CD8-positive, alpha-beta T cell (primary cell): ENCODE measurements at regions of chr4 and their contacts with region 1.

Region 1: GRCh38 chr4:75940692-75941253 is at the start of gene NAAA:
- DNase-seq: peak; percentile 44 to 92 (median 72)
- ATAC-seq: peak; percentile 79
- H3K4me3 ChIP-seq: peak within 1 kb of the TSS; percentile 71 to 85
- H3K4me3 Mint-ChIP-seq: peak within 1 kb of the TSS; percentile 95
- H3K27ac ChIP-seq: peak within 1 kb of the TSS; percentile 77 to 88
- H3K27ac Mint-ChIP-seq: peak within 1 kb of the TSS; percentile 95
- H3K4me1 ChIP-seq: peaks cover 5% of the 10 kb centered on the region
- H3K4me1 Mint-ChIP-seq: peaks cover 26% of the 10 kb centered on the region
- H3K27me3 ChIP-seq: no peaks in the 10 kb centered on the region
- H3K27me3 Mint-ChIP-seq: no peaks in the 10 kb centered on the region
- CTCF ChIP-seq: no peak
- total RNA-seq, gene NAAA: 26.1 to 30.4 TPM

Region 2: DNA sequence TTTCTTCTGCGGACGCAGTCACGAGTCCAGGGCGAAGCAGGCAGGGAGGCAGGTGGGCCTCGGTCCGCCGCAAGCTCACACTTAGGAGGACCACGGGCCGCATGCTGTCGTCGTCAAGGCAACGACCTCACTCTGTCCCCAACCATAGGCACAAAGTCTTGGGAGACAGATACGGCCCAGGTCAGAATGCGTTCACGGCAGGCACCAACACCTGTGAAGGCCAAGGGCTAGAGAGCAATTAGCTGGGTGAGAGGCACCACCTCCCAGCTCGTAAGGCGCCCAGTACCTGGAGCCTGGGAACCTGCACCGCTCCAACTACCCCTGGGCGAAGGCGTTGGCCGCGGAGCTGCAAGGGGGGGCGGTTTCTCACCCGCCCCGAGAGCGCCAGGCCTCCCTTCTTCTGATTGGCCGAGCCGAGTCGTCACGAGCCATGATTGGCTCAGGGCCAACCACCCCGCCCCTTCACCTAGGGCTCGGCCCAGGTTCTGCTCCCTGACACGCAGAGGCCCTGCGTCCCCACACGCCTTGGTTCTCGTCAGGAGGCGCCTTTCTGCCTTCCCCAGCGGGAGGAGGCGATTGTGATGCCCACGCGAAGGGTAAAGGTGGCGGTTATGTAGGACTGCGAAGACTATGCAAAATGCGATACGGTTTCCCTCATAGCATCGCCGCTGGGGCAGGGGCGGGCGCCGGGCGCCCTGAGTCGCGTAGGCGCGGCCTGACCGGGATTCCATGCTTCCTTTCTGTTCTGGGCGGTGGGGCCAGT is 310.4 kb before region 1 on chr4 and contains the start of gene CDKL2:
- CTCF ChIA-PET with region 1: no interaction called
- POLR2A ChIA-PET with region 1: no interaction called
- intact Hi-C with region 1: loop called (anchors 1 to 10 kb)
- DNase-seq: peak; percentile 85 to 96 (median 95)
- ATAC-seq: peak; percentile 99
- H3K4me3 ChIP-seq: peak within 1 kb of the TSS; percentile 74 to 82
- H3K4me3 Mint-ChIP-seq: peak within 1 kb of the TSS; percentile 91
- H3K27ac ChIP-seq: peak within 1 kb of the TSS; percentile 51 to 56
- H3K27ac Mint-ChIP-seq: peak within 1 kb of the TSS; percentile 84
- H3K4me1 ChIP-seq: peaks cover 6% of the 10 kb centered on the region
- H3K4me1 Mint-ChIP-seq: peaks cover 15% of the 10 kb centered on the region
- H3K27me3 ChIP-seq: no peaks in the 10 kb centered on the region
- H3K27me3 Mint-ChIP-seq: no peaks in the 10 kb centered on the region
- CTCF ChIP-seq: no peak
- total RNA-seq, gene CDKL2: 0.89 to 1.4 TPM

Region 3: DNA sequence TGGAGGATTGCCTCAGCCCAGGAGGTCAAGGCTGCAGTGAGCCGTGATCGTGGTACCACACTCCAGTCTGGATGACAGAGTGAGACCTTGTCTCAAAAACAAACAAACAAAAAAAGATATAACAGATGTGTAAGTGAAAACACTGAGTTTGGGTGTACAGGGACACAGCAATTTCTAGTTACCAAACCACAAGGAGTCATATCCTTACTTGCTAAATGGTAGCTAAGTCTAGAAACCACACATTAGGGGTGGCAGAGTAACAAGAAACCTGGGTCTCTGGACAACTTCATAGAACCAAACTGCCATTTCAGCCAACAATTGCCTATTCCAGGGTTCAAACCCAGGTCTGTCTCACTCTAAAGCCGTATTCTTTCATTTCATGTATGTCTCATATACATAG is 59.3 kb before region 1 on chr4:
- CTCF ChIA-PET with region 1: no interaction called
- POLR2A ChIA-PET with region 1: no interaction called
- intact Hi-C with region 1: no loop called
- DNase-seq: no peak
- ATAC-seq: no peak
- H3K4me3 ChIP-seq: no peak overlapping the region
- H3K4me3 Mint-ChIP-seq: no peak overlapping the region
- H3K27ac ChIP-seq: no peak overlapping the region
- H3K27ac Mint-ChIP-seq: no peak overlapping the region
- H3K4me1 ChIP-seq: no peaks in the 10 kb centered on the region
- H3K4me1 Mint-ChIP-seq: no peaks in the 10 kb centered on the region
- H3K27me3 ChIP-seq: no peaks in the 10 kb centered on the region
- H3K27me3 Mint-ChIP-seq: no peaks in the 10 kb centered on the region
- CTCF ChIP-seq: no peak

Region 4: DNA sequence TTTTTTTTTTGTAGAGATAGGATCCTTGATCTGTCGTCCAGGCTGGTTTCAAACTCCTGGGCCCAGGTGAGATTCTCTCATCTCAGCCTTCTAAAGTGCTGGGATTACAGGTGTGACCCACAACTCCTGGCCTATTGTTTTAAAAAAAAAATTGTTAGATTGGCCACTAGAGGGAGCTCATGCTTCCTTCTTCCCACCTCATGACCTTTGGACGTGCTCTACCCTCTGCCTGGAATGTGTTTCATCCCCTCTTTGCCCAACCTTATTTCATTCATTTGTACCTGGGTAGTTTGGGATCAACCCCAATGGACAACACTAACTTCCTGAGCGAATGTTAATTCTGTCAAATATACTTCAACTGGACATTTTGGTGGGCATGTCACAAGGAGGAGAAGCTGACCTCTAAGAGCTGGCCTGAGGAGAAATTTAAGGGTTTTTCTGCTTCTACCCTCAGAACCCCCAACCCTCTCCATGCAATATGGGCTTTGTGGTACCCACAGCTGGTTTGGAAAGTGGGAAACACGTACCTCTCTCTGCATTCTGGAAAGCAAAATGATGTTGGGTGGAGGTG is 44.9 kb before region 1 on chr4:
- CTCF ChIA-PET with region 1: interaction called, 3 read pairs
- POLR2A ChIA-PET with region 1: no interaction called
- intact Hi-C with region 1: loop called in 1 of 2 experiments (anchors 1 kb)
- DNase-seq: peak in 2 of 9 experiments; percentile 57 to 68
- ATAC-seq: peak; percentile 49
- H3K4me3 ChIP-seq: no peak overlapping the region
- H3K4me3 Mint-ChIP-seq: no peak overlapping the region
- H3K27ac ChIP-seq: no peak overlapping the region
- H3K27ac Mint-ChIP-seq: no peak overlapping the region
- H3K4me1 ChIP-seq: no peaks in the 10 kb centered on the region
- H3K4me1 Mint-ChIP-seq: no peaks in the 10 kb centered on the region
- H3K27me3 ChIP-seq: no peaks in the 10 kb centered on the region
- H3K27me3 Mint-ChIP-seq: no peaks in the 10 kb centered on the region
- CTCF ChIP-seq: peak; percentile 72

Region 5: DNA sequence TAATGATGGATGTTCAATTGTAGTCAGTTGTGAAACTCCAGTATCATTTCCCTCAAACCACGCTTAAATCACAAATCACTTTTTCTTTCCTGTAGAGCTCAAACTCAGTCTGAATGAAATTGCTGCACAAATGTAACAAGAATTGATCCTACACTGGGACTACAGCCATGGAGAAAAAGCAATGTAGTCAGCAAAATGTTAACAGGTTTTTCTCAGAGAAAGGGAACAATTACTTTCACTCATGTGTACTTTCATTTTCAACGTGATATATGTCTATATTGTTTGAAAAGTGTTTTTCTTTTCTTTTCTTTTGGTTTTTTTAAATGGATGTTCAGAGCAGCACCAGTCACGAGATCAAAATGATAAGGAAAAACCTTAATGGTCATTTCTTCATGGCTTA is 27.3 kb after region 1 on chr4:
- CTCF ChIA-PET with region 1: no interaction called
- POLR2A ChIA-PET with region 1: no interaction called
- intact Hi-C with region 1: no loop called
- DNase-seq: no peak
- ATAC-seq: no peak
- H3K4me3 ChIP-seq: no peak overlapping the region
- H3K4me3 Mint-ChIP-seq: no peak overlapping the region
- H3K27ac ChIP-seq: no peak overlapping the region
- H3K27ac Mint-ChIP-seq: no peak overlapping the region
- H3K4me1 ChIP-seq: no peaks in the 10 kb centered on the region
- H3K4me1 Mint-ChIP-seq: no peaks in the 10 kb centered on the region
- H3K27me3 ChIP-seq: no peaks in the 10 kb centered on the region
- H3K27me3 Mint-ChIP-seq: no peaks in the 10 kb centered on the region
- CTCF ChIP-seq: no peak

Region 6: DNA sequence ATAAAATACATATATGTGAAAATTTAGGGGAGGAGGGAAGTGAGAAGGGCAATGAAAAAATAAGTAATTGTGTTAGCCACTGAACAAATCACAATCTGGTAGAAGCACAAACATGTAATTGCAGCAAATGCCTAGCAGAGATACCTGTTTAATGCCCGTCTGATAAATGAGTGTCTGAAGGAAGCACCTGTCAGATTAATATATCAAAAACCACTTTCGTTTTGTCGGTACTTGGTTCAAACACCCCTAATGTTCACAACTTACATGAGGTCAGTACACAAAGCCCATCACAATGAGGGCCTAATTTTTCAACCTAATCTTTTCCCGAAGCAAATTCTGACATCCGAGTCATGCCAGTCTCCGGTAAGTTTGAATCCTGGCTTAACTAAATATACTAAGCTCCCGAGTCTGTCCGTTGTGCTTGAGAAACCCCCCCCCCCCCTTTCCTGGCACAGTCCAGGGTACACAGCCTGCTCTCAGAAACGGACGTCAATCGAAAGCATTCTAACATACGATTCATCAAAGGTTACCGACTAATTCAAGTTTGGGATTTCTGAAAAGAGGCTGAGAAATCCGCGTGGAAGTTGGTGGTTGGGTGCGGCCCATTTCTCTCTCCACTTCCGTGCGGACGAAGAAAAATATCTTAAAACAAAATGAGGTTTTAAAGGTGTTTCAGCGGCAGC is 49.2 kb after region 1 on chr4:
- CTCF ChIA-PET with region 1: no interaction called
- POLR2A ChIA-PET with region 1: interaction called, 16 read pairs
- intact Hi-C with region 1: loop called (anchors 1 to 2 kb)
- DNase-seq: peak in 2 of 9 experiments; percentile 8 to 32
- ATAC-seq: no peak
- H3K4me3 ChIP-seq: peak overlapping the region; percentile 78 to 91
- H3K4me3 Mint-ChIP-seq: peak overlapping the region; percentile 96
- H3K27ac ChIP-seq: peak overlapping the region; percentile 17 to 73
- H3K27ac Mint-ChIP-seq: peak overlapping the region; percentile 95
- H3K4me1 ChIP-seq: peaks cover 37% of the 10 kb centered on the region
- H3K4me1 Mint-ChIP-seq: peaks cover 29% of the 10 kb centered on the region
- H3K27me3 ChIP-seq: no peaks in the 10 kb centered on the region
- H3K27me3 Mint-ChIP-seq: peaks cover 1% of the 10 kb centered on the region
- CTCF ChIP-seq: no peak